ENCODE measurements at regions of chr1 and their contacts with region 1.

Region 1: GRCh38 chr1:185156854-185157598 is at the starts of genes SWT1 and TRMT1L:
- DNase-seq: peak; percentile 97 to 99 (median 98)
- H3K4me3 ChIP-seq: peak within 1 kb of the TSS; percentile 61 to 88
- H3K4me3 Mint-ChIP-seq: peak within 1 kb of the TSS; percentile 98 to 100 (median 99)
- H3K27ac ChIP-seq: peak within 1 kb of the TSS; percentile 97
- H3K27ac Mint-ChIP-seq: peak within 1 kb of the TSS; percentile 98 to 100 (median 99)
- H3K4me1 ChIP-seq: peaks cover 30% of the 10 kb centered on the region
- H3K4me1 Mint-ChIP-seq: peaks cover 24 to 54% (median 39%) of the 10 kb centered on the region in 4 donors
- H3K27me3 ChIP-seq: no peaks in the 10 kb centered on the region
- H3K27me3 Mint-ChIP-seq: no peaks in the 10 kb centered on the region
- total RNA-seq, gene SWT1: 9.7 to 10.6 TPM
- total RNA-seq, gene TRMT1L: 31.7 to 33.9 TPM

Region 2: GRCh38 chr1:184743062-184743756 is 413.8 kb before region 1 on chr1:
- CTCF ChIA-PET with region 1: no interaction called
- POLR2A ChIA-PET with region 1: interaction called, 4 read pairs
- intact Hi-C with region 1: loop called (anchors 2 kb)
- DNase-seq: peak; percentile 73 to 84 (median 78)
- H3K4me3 ChIP-seq: no peak overlapping the region
- H3K4me3 Mint-ChIP-seq: peak overlapping the region; percentile 15 to 80 (median 70)
- H3K27ac ChIP-seq: peak overlapping the region; percentile 47
- H3K27ac Mint-ChIP-seq: peak overlapping the region; percentile 83 to 97 (median 95)
- H3K4me1 ChIP-seq: peaks cover 62% of the 10 kb centered on the region
- H3K4me1 Mint-ChIP-seq: peaks cover 46 to 68% (median 61%) of the 10 kb centered on the region in 4 donors
- H3K27me3 ChIP-seq: no peaks in the 10 kb centered on the region
- H3K27me3 Mint-ChIP-seq: no peaks in the 10 kb centered on the region

Region 3: GRCh38 chr1:184973272-184974055 is 183.6 kb before region 1 on chr1:
- CTCF ChIA-PET with region 1: no interaction called
- POLR2A ChIA-PET with region 1: interaction called, 8 read pairs
- intact Hi-C with region 1: loop called (anchors 5 kb)
- DNase-seq: peak in 3 of 5 donors; percentile 55 to 86 (median 71)
- H3K4me3 ChIP-seq: peak overlapping the region; percentile 70 to 85
- H3K4me3 Mint-ChIP-seq: peak overlapping the region; percentile 93 to 100 (median 98)
- H3K27ac ChIP-seq: peak overlapping the region; percentile 91
- H3K27ac Mint-ChIP-seq: peak overlapping the region; percentile 96 to 100 (median 97)
- H3K4me1 ChIP-seq: peaks cover 66% of the 10 kb centered on the region
- H3K4me1 Mint-ChIP-seq: peaks cover 37 to 74% (median 55%) of the 10 kb centered on the region in 4 donors
- H3K27me3 ChIP-seq: no peaks in the 10 kb centered on the region
- H3K27me3 Mint-ChIP-seq: no peaks in the 10 kb centered on the region

Region 4: DNA sequence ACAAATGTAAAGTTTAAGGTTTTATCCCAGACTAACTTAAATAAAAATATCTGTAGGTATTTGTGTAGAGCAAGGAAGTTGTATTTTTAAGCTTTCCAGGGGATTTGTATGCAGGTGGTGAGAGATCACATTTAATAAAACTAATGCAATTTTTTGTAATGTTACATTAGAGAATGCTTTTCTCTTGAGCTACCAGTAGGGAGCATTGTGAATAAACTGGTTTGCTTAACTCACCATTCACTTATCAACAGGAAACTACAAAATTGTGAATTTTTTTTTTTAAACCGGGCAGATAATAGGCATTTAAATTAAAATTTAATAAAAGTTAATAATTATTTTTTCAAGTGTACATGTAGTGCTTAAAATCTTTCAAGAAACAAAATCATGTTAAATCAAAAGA is 81.4 kb after region 1 on chr1:
- CTCF ChIA-PET with region 1: interaction called, 3 read pairs
- POLR2A ChIA-PET with region 1: no interaction called
- intact Hi-C with region 1: loop called (anchors 1 kb)
- DNase-seq: peak in 4 of 5 donors; percentile 29 to 44 (median 35)
- H3K4me3 ChIP-seq: no peak overlapping the region
- H3K4me3 Mint-ChIP-seq: peak overlapping the region in 4 of 8 donors; percentile 4 to 60 (median 32)
- H3K27ac ChIP-seq: no peak overlapping the region
- H3K27ac Mint-ChIP-seq: peak overlapping the region in 2 of 7 donors; percentile 23 to 70
- H3K4me1 ChIP-seq: peaks cover 25% of the 10 kb centered on the region
- H3K4me1 Mint-ChIP-seq: peaks cover 17 to 35% (median 27%) of the 10 kb centered on the region in 4 donors
- H3K27me3 ChIP-seq: no peaks in the 10 kb centered on the region
- H3K27me3 Mint-ChIP-seq: no peaks in the 10 kb centered on the region

Region 5: DNA sequence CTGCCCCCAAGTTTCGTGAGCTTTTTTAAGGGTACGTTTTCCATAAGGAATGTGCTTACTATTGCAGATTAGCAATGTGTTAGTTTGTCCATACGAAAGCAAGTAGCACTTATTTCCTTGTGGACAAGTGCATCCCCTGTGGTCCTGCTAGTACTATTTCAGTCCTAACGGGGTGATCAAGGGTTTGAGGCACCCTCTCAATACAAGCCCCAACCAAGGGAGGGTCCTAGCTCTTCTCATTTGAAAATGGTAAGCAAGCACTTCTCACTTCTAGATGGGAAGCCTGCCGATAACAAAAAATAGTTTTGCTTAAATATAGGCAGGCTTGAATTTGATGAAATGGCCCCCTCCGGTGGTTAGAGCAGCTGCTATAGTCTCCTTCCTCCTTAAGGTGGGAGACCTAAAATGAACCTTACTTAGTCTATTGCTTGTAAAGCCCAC is 513.2 kb after region 1 on chr1:
- CTCF ChIA-PET with region 1: interaction called, 5 read pairs
- POLR2A ChIA-PET with region 1: interaction called, 5 read pairs
- intact Hi-C with region 1: loop called (anchors 1 kb)
- DNase-seq: peak; percentile 44 to 59 (median 57)
- H3K4me3 ChIP-seq: no peak overlapping the region
- H3K4me3 Mint-ChIP-seq: no peak overlapping the region
- H3K27ac ChIP-seq: no peak overlapping the region
- H3K27ac Mint-ChIP-seq: peak overlapping the region in 3 of 7 donors; percentile 3 to 31 (median 21)
- H3K4me1 ChIP-seq: peaks cover 14% of the 10 kb centered on the region
- H3K4me1 Mint-ChIP-seq: peaks cover 14 to 28% (median 20%) of the 10 kb centered on the region in 4 donors
- H3K27me3 ChIP-seq: no peaks in the 10 kb centered on the region
- H3K27me3 Mint-ChIP-seq: no peaks in the 10 kb centered on the region

Measured in CD4-positive, alpha-beta memory T cell (primary cell).